Endothelial cell of umbilical vein (primary cell): ENCODE measurements at regions of chr1 and their contacts with region 1.

Region 1: GRCh38 chr1:89483010-89483756 is 41.4 kb upstream of the LRRC8B start:
- DNase-seq: peak; percentile 83
- H3K4me3 ChIP-seq: no peak overlapping the region
- H3K27ac ChIP-seq: no peak overlapping the region
- H3K4me1 ChIP-seq: no peaks in the 10 kb centered on the region
- H3K27me3 ChIP-seq: peaks cover 0 to 7% of the 10 kb centered on the region in 2 experiments
- CTCF ChIP-seq: peak; percentile 61 to 67
- POLR2A ChIP-seq: no peak

Region 2: GRCh38 chr1:89499320-89499719 is 16.1 kb after region 1 on chr1:
- CTCF ChIA-PET with region 1: interaction called, 14 read pairs
- POLR2A ChIA-PET with region 1: no interaction called
- dilution Hi-C with region 1: no loop called
- intact Hi-C with region 1: no loop called
- DNase-seq: no peak
- H3K4me3 ChIP-seq: no peak overlapping the region
- H3K27ac ChIP-seq: no peak overlapping the region
- H3K4me1 ChIP-seq: no peaks in the 10 kb centered on the region
- H3K27me3 ChIP-seq: peaks cover 22 to 31% of the 10 kb centered on the region in 2 experiments
- CTCF ChIP-seq: no peak
- POLR2A ChIP-seq: no peak

Region 3: GRCh38 chr1:89516055-89516454 is 32.9 kb after region 1 on chr1:
- CTCF ChIA-PET with region 1: interaction called, 12 read pairs
- POLR2A ChIA-PET with region 1: no interaction called
- dilution Hi-C with region 1: no loop called
- intact Hi-C with region 1: no loop called
- DNase-seq: no peak
- H3K4me3 ChIP-seq: no peak overlapping the region
- H3K27ac ChIP-seq: no peak overlapping the region
- H3K4me1 ChIP-seq: no peaks in the 10 kb centered on the region
- H3K27me3 ChIP-seq: peaks cover 0 to 7% of the 10 kb centered on the region in 2 experiments
- CTCF ChIP-seq: no peak
- POLR2A ChIP-seq: no peak

Region 4: DNA sequence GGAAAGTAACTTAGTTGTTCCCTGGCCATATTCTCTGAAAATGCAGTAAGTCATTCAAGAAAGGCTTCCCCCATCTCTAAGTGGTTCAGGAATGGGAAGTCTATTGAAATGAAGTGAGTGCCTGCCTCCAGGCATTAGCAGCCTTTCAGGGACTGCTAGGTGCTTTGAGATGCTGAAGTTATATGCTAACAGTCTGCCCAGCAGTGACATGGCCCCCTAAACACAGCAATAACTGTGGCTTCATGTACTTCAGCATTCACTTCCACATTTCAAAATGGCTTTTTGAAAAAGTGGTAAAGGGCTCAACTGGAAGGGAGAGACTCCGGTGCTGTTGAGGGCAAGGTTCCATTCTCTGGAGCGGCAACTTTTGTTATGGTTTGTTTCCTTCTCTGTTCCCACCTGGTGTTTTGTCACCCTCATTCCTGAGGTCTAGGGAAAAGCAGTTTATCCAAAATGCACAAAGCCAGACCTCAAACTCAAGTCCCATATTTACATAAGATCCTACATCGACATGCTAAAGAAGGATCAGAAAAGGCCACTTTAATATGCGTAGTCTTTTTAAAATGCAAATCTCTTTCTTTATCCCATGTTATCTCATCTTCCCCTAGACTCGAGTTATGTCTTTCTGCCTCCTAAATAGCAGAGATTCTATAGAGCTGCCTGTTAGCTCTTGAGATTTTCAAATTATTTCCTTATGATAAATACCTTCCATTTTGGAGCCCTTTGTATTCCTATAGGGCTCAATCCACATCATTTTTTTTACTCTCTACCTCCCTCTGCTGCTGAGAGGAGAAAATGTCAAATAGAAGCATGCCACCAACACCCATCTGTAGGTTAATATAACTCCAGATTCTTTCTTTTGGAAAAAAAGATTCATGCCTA is 115.5 kb after region 1 on chr1:
- CTCF ChIA-PET with region 1: interaction called, 111 read pairs
- POLR2A ChIA-PET with region 1: no interaction called
- dilution Hi-C with region 1: no loop called
- intact Hi-C with region 1: loop called (anchors 1 kb)
- DNase-seq: peak; percentile 68
- H3K4me3 ChIP-seq: no peak overlapping the region
- H3K27ac ChIP-seq: no peak overlapping the region
- H3K4me1 ChIP-seq: peaks cover 1% of the 10 kb centered on the region
- H3K27me3 ChIP-seq: no peaks in the 10 kb centered on the region
- CTCF ChIP-seq: peak; percentile 33 to 48
- POLR2A ChIP-seq: no peak

Region 5: GRCh38 chr1:89605692-89606091 is 122.5 kb after region 1 on chr1:
- CTCF ChIA-PET with region 1: interaction called, 111 read pairs
- POLR2A ChIA-PET with region 1: no interaction called
- dilution Hi-C with region 1: no loop called
- intact Hi-C with region 1: no loop called
- DNase-seq: peak; percentile 82
- H3K4me3 ChIP-seq: no peak overlapping the region
- H3K27ac ChIP-seq: no peak overlapping the region
- H3K4me1 ChIP-seq: peaks cover 14% of the 10 kb centered on the region
- H3K27me3 ChIP-seq: no peaks in the 10 kb centered on the region
- CTCF ChIP-seq: no peak
- POLR2A ChIP-seq: no peak

Region 6: DNA sequence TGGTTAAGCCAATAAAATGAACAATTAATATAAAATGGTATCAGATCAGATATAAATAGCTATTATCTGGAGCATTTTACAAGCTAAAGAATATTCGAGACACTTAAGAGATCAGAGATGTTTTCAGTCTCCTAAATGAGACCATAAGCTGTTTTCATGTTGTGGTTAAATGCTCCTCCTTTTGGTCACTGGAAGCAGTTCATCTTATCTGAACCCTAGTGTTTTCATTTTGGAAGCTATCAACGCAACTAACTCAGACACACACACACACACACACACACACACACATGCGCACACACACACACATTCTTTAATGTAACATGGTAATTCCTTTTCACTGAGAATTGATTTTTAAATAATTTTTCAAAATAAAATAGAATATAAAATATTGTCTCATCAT is 139.7 kb after region 1 on chr1:
- CTCF ChIA-PET with region 1: interaction called, 40 read pairs
- POLR2A ChIA-PET with region 1: no interaction called
- dilution Hi-C with region 1: no loop called
- intact Hi-C with region 1: no loop called
- DNase-seq: no peak
- H3K4me3 ChIP-seq: no peak overlapping the region
- H3K27ac ChIP-seq: no peak overlapping the region
- H3K4me1 ChIP-seq: peaks cover 2% of the 10 kb centered on the region
- H3K27me3 ChIP-seq: no peaks in the 10 kb centered on the region
- CTCF ChIP-seq: no peak
- POLR2A ChIP-seq: no peak

Region 7: DNA sequence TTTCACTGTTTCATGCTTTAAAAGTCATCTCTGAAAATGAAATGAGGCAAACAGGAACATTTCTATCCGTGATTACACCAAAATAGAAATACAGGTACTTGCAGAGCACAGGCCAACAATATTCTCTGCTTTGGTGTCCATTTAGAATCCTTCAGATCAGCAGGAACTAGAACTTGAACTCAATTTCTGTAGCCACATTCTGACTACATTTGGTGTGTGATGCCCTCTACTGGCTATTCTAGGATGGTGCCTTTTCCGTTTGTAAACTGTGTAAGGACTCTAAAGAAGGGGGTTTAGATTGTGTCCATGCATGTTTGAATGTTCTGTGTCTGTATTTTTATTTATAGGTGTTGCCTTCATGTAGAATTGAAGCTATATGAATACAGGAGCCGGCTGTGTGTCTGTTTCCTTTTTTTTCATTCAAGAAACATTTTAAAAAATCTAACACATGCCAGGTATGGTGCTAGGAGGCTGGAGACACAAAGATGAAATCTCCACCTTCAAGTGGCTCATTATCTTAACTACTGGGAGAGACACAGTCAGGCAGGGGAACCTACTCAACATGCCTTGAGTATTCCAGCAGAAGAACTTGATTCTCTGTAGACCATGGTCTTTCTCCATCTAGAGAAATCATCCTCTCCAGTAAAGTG is 504.1 kb after region 1 on chr1:
- CTCF ChIA-PET with region 1: interaction called, 7 read pairs
- POLR2A ChIA-PET with region 1: no interaction called
- dilution Hi-C with region 1: no loop called
- intact Hi-C with region 1: loop called (anchors 5 kb)
- DNase-seq: peak; percentile 82
- H3K4me3 ChIP-seq: no peak overlapping the region
- H3K27ac ChIP-seq: no peak overlapping the region
- H3K4me1 ChIP-seq: no peaks in the 10 kb centered on the region
- H3K27me3 ChIP-seq: peaks cover 0 to 2% of the 10 kb centered on the region in 2 experiments
- CTCF ChIP-seq: peak; percentile 66 to 68
- POLR2A ChIP-seq: no peak